ENCODE measurements at regions of chr20 and their contacts with region 1.

Region 1: DNA sequence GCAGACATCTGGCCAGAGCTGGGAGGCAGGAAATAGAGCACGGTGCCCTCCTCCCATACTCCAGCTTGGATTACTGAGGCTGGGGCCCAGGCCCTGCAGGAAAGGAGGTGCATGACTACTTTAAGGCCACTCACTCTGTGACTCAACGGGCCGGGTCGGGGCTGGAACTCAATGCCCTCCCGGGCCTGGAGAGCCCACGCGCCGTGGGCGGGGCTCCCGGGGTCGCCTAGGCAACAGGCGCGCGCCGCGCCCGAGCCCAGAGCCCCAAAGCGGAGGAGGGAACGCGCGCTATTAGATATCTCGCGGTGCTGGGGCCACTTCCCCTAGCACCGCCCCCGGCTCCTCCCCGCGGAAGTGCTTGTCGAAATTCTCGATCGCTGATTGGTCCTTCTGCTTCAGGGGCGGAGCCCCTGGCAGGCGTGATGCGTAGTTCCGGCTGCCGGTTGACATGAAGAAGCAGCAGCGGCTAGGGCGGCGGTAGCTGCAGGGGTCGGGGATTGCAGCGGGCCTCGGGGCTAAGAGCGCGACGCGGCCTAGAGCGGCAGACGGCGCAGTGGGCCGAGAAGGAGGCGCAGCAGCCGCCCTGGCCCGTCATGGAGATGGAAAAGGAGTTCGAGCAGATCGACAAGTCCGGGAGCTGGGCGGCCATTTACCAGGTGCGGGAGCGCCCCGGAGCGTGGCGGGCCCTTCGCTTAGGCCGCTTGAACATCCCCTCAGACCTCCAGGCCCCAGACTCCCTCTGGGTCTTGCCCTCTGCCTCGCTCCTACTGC is at the start of gene PTPN1:
- DNase-seq: peak; percentile 99
- ATAC-seq: peak; percentile 93
- H3K4me3 Mint-ChIP-seq: peak within 1 kb of the TSS; percentile 98
- H3K27ac Mint-ChIP-seq: peak within 1 kb of the TSS; percentile 93
- H3K4me1 Mint-ChIP-seq: peaks cover 38% of the 10 kb centered on the region
- H3K27me3 Mint-ChIP-seq: no peaks in the 10 kb centered on the region
- CTCF ChIP-seq: no peak
- total RNA-seq, gene PTPN1: 65.1 to 66.6 TPM

Region 2: DNA sequence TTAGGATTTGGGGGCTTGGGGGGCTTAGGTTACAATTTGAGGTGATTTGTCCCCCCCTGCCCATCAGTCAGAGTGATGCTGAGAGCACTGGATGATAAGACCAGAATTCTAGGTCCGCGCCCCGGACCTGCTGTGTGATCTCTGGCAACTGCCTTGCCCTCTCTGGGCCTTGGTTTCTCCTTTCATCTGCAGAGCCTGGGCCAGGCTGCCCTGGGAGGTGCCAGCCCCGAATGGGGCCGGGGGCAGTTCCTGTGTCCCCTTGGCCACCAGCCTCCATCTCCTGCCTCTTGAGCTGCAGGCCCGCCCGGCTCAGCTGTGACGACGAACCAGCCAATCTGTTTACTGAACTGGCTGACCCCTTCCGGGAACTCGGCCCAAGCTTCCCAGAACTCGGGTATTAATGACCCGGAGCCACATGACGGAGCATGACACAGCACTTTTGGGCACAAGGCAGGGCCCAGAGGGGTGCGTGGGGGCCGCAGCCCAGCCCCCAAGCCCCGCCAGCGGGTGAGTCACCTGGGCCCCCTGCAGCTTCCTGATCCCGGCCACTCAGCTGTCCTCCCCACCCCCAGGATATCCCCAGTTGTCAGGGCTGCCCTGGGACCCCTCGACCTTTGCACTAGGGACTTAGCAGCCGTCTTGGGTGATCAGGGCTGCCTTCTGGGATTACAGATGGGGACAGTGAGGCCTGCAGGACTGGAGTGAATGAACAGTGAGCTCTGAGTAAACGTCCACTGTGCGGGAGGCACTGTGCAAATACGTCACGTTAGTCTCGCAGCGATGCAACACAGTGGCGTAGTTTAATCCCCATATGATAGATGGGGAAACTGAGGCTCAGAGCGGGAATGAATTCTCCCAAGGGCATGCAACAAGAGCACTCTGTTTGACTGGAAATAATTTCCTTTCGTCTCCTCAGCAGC is 217.5 kb before region 1 on chr20:
- CTCF ChIA-PET with region 1: no interaction called
- POLR2A ChIA-PET with region 1: no interaction called
- intact Hi-C with region 1: no loop called
- DNase-seq: peak; percentile 63
- ATAC-seq: peak; percentile 54
- H3K4me3 Mint-ChIP-seq: no peak overlapping the region
- H3K27ac Mint-ChIP-seq: no peak overlapping the region
- H3K4me1 Mint-ChIP-seq: peaks cover 6% of the 10 kb centered on the region
- H3K27me3 Mint-ChIP-seq: no peaks in the 10 kb centered on the region
- CTCF ChIP-seq: no peak

Region 3: GRCh38 chr20:50523552-50524167 is 13.5 kb after region 1 on chr20:
- CTCF ChIA-PET with region 1: interaction called, 4 read pairs
- POLR2A ChIA-PET with region 1: interaction called, 25 read pairs
- intact Hi-C with region 1: no loop called
- DNase-seq: no peak
- ATAC-seq: peak; percentile 45
- H3K4me3 Mint-ChIP-seq: peak overlapping the region; percentile 4
- H3K27ac Mint-ChIP-seq: peak overlapping the region; percentile 87
- H3K4me1 Mint-ChIP-seq: peaks cover 52% of the 10 kb centered on the region
- H3K27me3 Mint-ChIP-seq: no peaks in the 10 kb centered on the region
- CTCF ChIP-seq: no peak

Region 4: DNA sequence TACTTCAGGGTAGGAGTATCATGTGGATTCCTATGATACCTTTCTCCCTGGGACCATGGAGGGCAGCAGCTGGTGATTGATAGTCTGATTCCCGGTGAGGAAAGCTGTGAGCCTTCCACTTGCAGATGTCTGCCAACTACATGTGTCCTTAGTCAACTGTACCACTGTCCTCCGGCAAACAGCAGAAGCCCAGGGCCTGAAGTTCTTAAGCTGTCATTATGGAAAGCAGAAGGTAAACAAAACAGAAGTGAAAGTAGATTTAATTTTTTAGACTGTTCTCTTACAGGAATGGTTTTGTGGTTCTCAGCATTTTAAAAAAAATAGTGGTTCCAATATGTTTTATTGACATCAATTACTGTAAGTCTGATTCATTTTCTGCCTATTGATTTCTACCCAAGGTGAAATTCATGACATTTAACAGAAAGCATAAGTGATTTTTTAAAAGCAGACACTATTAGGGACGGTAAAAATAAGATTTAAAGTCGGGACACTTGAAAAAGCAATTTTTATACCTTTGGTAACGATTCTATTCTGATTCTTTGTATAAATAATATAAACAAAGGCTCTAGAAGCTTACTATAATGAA is 36.7 kb after region 1 on chr20:
- CTCF ChIA-PET with region 1: interaction called, 12 read pairs
- POLR2A ChIA-PET with region 1: interaction called, 3 read pairs
- intact Hi-C with region 1: no loop called
- DNase-seq: peak; percentile 38
- ATAC-seq: peak; percentile 55
- H3K4me3 Mint-ChIP-seq: peak overlapping the region; percentile 35
- H3K27ac Mint-ChIP-seq: peak overlapping the region; percentile 69
- H3K4me1 Mint-ChIP-seq: peaks cover 51% of the 10 kb centered on the region
- H3K27me3 Mint-ChIP-seq: no peaks in the 10 kb centered on the region
- CTCF ChIP-seq: no peak

Region 5: DNA sequence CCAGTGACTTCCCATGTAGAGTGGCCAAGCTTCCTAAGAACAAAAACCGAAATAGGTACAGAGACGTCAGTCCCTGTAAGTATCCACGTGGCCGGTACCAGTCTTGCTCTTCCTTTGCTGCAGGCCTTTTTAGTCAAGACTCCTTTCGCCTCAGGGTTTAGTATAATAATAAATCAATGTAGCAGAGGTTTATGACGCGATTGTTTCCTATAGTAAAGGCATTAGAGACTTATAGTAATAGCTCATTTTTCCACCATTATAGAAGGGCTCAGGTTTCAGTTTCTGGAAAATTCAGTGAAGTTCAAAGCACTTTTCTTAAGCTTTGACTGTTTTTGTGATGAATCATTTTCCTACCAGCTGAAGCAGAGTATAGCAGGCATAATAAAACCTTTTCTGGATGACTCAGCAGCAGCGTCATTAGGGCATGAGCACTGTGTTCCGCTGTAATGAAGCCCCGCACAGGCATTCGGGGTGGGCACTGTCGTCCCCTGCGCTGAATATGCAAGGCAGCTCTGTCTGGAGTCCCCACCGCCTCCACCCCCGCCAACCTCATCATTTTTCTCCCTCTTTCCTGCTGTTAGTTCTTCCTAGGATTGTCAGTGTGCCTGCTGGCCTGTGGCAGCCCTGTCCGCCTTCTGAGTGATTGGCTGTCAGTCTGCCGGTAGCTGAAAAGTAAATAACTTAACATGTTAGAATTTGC is 51.4 kb after region 1 on chr20:
- CTCF ChIA-PET with region 1: interaction called, 10 read pairs
- POLR2A ChIA-PET with region 1: interaction called, 40 read pairs
- intact Hi-C with region 1: loop called (anchors 5 kb)
- DNase-seq: peak; percentile 87
- ATAC-seq: peak; percentile 87
- H3K4me3 Mint-ChIP-seq: peak overlapping the region; percentile 50
- H3K27ac Mint-ChIP-seq: peak overlapping the region; percentile 94
- H3K4me1 Mint-ChIP-seq: peaks cover 65% of the 10 kb centered on the region
- H3K27me3 Mint-ChIP-seq: no peaks in the 10 kb centered on the region
- CTCF ChIP-seq: no peak

Region 6: DNA sequence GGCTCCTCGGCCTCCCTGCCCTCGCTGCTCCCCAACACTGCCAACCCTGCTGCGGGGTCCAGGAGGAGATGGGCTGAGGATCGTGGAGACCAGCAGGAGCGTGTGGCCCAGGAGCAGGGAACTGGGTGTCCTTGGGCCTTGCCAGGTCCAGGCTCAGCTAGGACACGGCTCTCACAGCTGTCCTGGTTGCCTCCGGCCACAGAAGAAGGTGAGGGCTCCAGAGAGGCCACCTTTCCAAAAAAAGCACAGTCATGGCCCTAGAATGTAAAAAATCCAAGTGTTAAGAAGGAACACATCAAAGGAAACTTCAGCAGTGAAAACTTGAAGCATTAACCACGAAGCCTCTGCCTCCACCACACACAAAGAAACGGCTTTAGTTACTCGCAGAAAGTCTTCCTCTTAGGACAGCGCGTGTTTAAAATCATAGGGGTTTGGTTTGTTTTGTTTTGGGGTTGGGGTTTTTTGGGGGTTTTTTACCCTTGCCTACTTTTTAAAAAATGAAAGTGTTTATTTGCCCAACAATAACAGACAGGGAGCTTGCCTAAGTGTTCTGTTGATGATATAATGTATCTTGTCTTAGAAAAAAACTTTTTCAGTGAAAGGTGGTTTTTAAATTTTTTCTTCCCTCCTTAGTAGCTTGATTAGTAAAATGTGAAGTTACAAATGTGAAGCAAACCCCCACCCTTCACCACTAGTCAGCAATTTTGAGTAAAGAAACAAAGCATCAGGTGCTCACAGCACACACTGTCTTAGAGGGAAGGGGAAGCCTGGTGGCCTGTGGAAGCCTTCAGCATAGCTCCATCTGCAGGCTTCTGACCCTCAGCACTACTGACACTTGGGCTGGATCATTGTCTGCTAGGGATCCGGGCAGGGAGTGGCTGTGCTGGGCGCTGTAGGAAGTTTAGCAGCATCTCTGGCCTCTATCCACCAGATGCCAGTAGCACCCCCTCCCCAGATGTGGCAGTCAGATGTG is 60.0 kb after region 1 on chr20:
- CTCF ChIA-PET with region 1: interaction called, 64 read pairs
- POLR2A ChIA-PET with region 1: interaction called, 10 read pairs
- intact Hi-C with region 1: no loop called
- DNase-seq: peak; percentile 71
- ATAC-seq: peak; percentile 93
- H3K4me3 Mint-ChIP-seq: no peak overlapping the region
- H3K27ac Mint-ChIP-seq: peak overlapping the region; percentile 78
- H3K4me1 Mint-ChIP-seq: peaks cover 58% of the 10 kb centered on the region
- H3K27me3 Mint-ChIP-seq: no peaks in the 10 kb centered on the region
- CTCF ChIP-seq: peak; percentile 46

Measured in activated CD8-positive, alpha-beta T cell treated with anti-CD3 and anti-CD28 coated beads for 36 hours (primary cell).